HepG2 (cell line): ENCODE measurements at regions of chr15 and their contacts with region 1.

Region 1: DNA sequence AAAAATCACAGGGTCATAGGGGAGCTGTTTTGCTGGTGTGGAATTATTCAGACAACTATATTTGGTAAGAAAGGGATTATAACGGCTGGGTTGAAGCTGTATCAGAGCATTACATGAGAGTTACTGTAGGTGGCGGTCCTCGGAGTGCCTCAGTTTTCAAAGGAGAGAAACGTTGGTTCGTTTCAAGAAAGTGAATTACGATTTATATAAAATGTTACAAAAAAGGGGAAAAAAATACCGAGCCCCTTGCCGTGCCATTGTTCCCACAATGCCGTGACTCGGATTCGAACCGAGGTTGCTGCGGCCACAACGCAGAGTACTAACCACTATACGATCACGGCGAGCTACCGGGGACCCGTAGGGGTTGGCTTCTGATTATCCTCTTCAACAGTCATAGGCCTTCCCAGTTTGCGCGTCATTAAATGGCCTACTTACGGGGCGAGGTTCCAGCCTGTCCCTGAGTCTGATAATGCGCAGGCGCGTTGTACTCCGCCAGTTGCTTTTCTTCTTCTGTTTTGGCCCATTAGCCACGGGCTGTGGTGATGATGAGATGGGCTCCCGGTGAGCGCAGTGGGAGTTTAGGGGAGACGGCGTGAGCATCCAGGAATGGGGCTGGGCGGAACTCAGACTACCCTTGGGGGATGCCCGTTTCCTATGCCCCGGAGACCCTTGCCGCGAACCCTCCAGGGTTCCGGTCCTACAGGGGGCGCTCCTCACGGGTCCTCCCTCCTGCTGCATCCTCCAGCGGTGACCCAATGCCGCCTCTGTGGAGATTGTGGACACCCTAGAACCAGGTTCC is 10.8 kb upstream of the SHF start:
- DNase-seq: peak; percentile 92
- ATAC-seq: peak; percentile 58
- H3K4me3 ChIP-seq: peak overlapping the region; percentile 68 to 95 (median 88)
- H3K27ac ChIP-seq: peak overlapping the region; percentile 94
- H3K4me1 ChIP-seq: peaks cover 38% of the 10 kb centered on the region
- H3K27me3 ChIP-seq: peaks cover 0 to 4% of the 10 kb centered on the region in 2 experiments; a peak in 2 of 5 replicates
- CTCF ChIP-seq: peak; percentile 92
- EP300 ChIP-seq: peak in 1 of 2 experiments; percentile 23; a peak in 1 of 4 replicates
- POLR2A ChIP-seq: peak; percentile 59 to 68
- RAD21 ChIP-seq: no peak

Region 2: DNA sequence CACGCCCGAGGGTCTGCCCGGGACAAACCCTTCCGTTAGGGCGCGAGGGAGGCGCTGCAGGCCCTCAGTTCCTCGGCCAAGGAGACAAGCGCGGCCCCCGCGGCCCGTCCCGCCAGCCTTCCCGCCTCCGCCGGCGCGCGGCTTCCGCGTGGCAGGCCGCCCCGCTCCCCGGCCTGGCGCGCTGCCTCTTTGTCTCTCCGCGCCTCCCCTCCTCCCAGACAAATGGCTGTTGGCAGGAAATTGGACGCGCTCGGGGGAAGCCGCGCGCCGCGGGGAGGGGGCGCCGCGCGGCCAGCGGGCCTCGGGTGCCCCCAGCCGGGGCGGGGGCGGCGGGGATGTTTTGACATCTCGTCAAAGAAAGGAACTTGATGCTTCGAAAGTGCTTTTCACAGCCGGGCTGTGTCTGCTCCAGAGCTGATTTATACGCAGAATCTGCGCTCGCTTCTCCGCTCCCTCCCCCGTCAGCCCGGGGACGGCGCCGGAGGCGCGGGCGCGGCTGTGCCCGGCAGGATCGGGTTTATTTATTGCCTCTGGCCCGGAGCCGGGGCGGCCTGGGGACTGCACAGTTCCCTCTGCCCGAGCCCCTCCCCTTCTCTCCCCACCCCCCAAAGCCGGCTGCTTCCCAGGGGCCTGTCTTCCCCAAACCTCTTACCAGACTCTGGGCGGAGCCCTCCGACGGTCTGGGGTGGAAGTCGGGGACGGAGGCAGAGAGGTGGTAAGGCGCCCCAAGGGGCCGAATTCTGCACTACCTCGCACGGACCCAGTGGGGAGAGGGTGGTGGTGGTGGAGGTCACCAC is 31.5 kb before region 1 on chr15:
- CTCF ChIA-PET with region 1: no interaction called
- POLR2A ChIA-PET with region 1: interaction called, 13 read pairs
- in situ Hi-C with region 1: no loop called
- intact Hi-C with region 1: loop called (anchors 1 kb)
- DNase-seq: peak; percentile 62
- ATAC-seq: peak; percentile 76
- H3K4me3 ChIP-seq: peak overlapping the region; percentile 69 to 76 (median 75)
- H3K27ac ChIP-seq: peak overlapping the region; percentile 76
- H3K4me1 ChIP-seq: peaks cover 41% of the 10 kb centered on the region
- H3K27me3 ChIP-seq: no peaks in the 10 kb centered on the region
- CTCF ChIP-seq: peak; percentile 68
- EP300 ChIP-seq: no peak
- POLR2A ChIP-seq: peak; percentile 30 to 34; a peak in 3 of 4 replicates
- RAD21 ChIP-seq: no peak

Region 3: GRCh38 chr15:45187894-45188830 is 10.4 kb before region 1 on chr15 and contains the start of gene SHF:
- CTCF ChIA-PET with region 1: interaction called, 3 read pairs
- POLR2A ChIA-PET with region 1: interaction called, 42 read pairs
- in situ Hi-C with region 1: no loop called
- intact Hi-C with region 1: loop called (anchors 2 kb)
- DNase-seq: peak; percentile 31
- ATAC-seq: peak; percentile 69
- H3K4me3 ChIP-seq: peak within 1 kb of the TSS; percentile 79 to 83 (median 82)
- H3K27ac ChIP-seq: peak within 1 kb of the TSS; percentile 50
- H3K4me1 ChIP-seq: peaks cover 45% of the 10 kb centered on the region
- H3K27me3 ChIP-seq: peaks cover 0 to 3% of the 10 kb centered on the region in 2 experiments; a peak in 1 of 5 replicates
- CTCF ChIP-seq: no peak
- EP300 ChIP-seq: no peak
- POLR2A ChIP-seq: peak in 1 of 2 experiments; percentile 65; a peak in 1 of 4 replicates
- RAD21 ChIP-seq: no peak
- total RNA-seq, gene SHF: 16.8 and 25.5 TPM in 2 replicates

Region 4: GRCh38 chr15:45242289-45242688 is 43.8 kb after region 1 on chr15:
- CTCF ChIA-PET with region 1: no interaction called
- POLR2A ChIA-PET with region 1: no interaction called
- in situ Hi-C with region 1: no loop called
- intact Hi-C with region 1: no loop called
- DNase-seq: no peak
- ATAC-seq: no peak
- H3K4me3 ChIP-seq: no peak overlapping the region
- H3K27ac ChIP-seq: no peak overlapping the region
- H3K4me1 ChIP-seq: no peaks in the 10 kb centered on the region
- H3K27me3 ChIP-seq: no peaks in the 10 kb centered on the region
- CTCF ChIP-seq: no peak
- EP300 ChIP-seq: no peak
- POLR2A ChIP-seq: no peak
- RAD21 ChIP-seq: no peak

Region 5: DNA sequence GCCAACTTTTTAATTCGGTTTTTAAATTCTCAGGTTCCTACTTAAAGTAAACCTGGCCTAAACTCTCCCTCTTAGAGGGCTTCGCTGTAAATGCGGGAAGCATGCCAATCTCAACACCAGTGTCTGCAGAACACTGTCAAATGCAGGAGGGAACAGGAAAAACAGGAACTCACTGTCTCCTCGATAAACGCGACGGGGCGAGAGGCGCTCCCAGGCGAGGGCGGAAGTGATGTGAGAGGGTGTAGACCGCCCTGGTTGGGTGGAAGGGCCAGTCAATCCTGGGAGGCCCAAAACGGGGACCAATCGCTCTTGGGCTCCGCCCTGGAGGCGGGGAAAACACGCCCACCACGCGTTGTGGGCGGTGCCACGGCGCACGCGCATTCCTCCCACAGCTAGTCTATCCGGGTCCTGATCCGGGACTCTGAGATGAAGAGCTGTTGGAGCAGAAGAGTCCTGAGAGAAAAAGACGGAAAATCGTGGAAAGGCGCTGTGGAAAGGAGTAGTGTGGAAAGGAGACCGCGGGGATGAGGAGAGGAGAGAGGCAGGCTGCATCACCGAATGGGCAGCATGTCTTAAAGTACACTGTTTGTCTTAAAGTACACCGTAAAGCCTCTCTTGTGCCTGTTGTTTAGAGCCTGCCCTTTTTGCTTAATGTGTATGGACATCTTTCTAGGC is 80.6 kb after region 1 on chr15:
- CTCF ChIA-PET with region 1: interaction called, 3 read pairs
- POLR2A ChIA-PET with region 1: interaction called, 23 read pairs
- in situ Hi-C with region 1: no loop called
- intact Hi-C with region 1: loop called (anchors 2 kb)
- DNase-seq: peak; percentile 97
- ATAC-seq: peak; percentile 100
- H3K4me3 ChIP-seq: peak overlapping the region; percentile 69 to 91 (median 85)
- H3K27ac ChIP-seq: peak overlapping the region; percentile 73
- H3K4me1 ChIP-seq: peaks cover 34% of the 10 kb centered on the region
- H3K27me3 ChIP-seq: no peaks in the 10 kb centered on the region
- CTCF ChIP-seq: 0 out of 2 replicates have a peak, but pooled peaks have one; percentile 8
- EP300 ChIP-seq: no peak
- POLR2A ChIP-seq: peak; percentile 81 to 86
- RAD21 ChIP-seq: no peak

Region 6: DNA sequence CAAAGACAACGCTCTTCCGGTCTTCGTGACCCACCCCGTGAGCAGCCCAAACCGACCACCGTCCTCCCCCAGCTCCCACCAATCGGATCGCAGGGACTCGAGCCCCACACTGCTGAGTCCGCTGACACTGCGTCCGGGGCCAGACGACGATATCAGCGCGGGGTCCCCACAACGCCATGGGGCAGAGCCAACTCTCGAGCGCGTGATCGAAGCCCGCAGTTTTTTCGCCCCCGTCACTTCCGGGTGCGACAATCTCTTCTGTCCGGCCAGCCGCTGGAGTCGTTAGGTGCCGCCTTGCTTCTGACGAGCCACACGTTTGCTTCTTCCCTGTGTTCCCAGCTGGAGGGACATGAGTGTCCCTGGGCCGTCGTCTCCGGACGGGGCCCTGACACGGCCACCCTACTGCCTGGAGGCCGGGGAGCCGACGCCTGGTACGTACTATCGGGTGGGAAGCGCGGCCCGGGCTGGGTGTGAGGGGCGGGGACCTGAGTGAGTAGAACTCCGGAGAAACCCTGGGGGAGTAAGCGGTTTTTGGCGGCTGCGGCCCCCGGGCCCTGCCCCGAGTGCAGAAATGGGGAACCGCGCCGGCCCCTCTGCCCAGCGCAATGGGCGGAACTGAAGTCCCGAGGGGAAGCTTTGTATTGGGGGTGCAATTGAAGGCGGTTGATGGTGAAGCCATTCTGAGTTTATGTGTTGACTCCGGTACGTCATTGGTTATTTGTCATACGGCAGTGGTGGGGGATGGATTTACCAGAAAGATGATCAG is 388.7 kb after region 1 on chr15 and contains the start of gene BLOC1S6:
- CTCF ChIA-PET with region 1: no interaction called
- POLR2A ChIA-PET with region 1: interaction called, 3 read pairs
- in situ Hi-C with region 1: no loop called
- intact Hi-C with region 1: loop called (anchors 5 kb)
- DNase-seq: peak; percentile 91
- ATAC-seq: peak; percentile 97
- H3K4me3 ChIP-seq: peak within 1 kb of the TSS; percentile 81 to 96 (median 82)
- H3K27ac ChIP-seq: peak within 1 kb of the TSS; percentile 97
- H3K4me1 ChIP-seq: peaks cover 33% of the 10 kb centered on the region
- H3K27me3 ChIP-seq: no peaks in the 10 kb centered on the region; a peak in 1 of 5 replicates
- CTCF ChIP-seq: no peak
- EP300 ChIP-seq: 0 out of 4 replicates have a peak, but pooled peaks have one; percentile 8 to 17
- POLR2A ChIP-seq: peak; percentile 79 to 81; a peak in 3 of 4 replicates
- RAD21 ChIP-seq: peak; percentile 29; the same call in 1 of the 2 replicates
- total RNA-seq, gene BLOC1S6: 44.3 and 67.5 TPM in 2 replicates

Region 7: GRCh38 chr15:45611305-45611704 is 412.8 kb after region 1 on chr15:
- CTCF ChIA-PET with region 1: no interaction called
- POLR2A ChIA-PET with region 1: no interaction called
- in situ Hi-C with region 1: no loop called
- intact Hi-C with region 1: loop called (anchors 10 kb)
- DNase-seq: peak; percentile 12
- ATAC-seq: no peak
- H3K4me3 ChIP-seq: no peak overlapping the region
- H3K27ac ChIP-seq: no peak overlapping the region
- H3K4me1 ChIP-seq: no peaks in the 10 kb centered on the region; the same call in 1 of the 2 replicates
- H3K27me3 ChIP-seq: no peaks in the 10 kb centered on the region
- CTCF ChIP-seq: peak; percentile 37
- EP300 ChIP-seq: no peak
- POLR2A ChIP-seq: no peak
- RAD21 ChIP-seq: no peak